ENCODE measurements at regions of chr17 and their contacts with region 1.

Region 1: GRCh38 chr17:79188048-79188447 is 113.4 kb downstream of the ENGASE start:
- DNase-seq: peak; percentile 97
- H3K4me3 ChIP-seq: no peak overlapping the region
- H3K27ac ChIP-seq: no peak overlapping the region
- H3K4me1 ChIP-seq: peaks cover 0 to 3% of the 10 kb centered on the region in 2 experiments; a peak in 1 of 4 replicates
- H3K27me3 ChIP-seq: peaks cover 44% of the 10 kb centered on the region
- CTCF ChIP-seq: peak; percentile 63
- EP300 ChIP-seq: no peak
- RAD21 ChIP-seq: peak; percentile 92

Region 2: DNA sequence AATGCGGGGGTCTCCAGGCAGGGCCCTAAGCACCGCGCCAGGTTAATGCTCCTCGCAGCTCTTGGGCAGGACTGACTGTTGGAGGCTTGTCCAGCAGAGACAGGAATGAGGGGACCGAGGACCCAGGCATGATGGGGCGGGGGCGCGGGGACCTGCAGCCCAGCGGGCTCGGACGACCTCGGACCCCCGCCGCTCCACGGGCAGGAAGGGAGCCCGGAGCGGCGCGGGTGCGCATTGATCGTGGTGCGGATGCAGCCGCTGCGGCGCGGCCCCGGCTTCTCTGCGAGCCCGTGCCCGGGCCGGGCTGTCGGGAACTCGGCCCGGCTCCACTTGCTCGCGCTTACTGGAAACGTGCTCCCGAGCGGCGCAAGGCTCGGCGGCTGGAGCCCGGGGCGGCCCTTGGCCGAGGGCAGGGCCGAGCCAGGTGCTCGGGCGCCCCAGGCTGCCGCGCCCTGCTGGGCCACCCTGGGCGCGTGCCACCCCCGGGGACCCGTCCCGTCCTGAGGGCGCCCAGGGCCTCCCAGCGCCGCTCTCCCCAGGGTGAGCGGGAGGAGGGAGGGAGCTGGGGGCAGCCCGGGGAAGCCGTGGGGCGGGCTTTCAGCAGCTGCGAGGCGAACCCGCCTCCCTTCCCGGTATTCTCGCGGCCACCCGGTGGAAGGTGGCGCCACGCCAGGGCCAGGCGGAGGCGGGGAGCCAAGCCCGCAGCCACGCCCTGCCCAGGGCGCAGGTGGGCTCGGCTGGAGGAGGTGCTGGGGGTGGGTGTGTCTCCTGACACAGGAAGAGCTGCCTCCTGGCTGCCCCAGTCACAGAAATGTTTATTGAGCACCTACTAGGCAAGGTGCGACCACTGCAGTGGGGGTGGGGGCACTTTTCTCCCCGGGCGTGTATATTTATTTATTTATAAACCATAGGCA is 874.1 kb before region 1 on chr17:
- CTCF ChIA-PET with region 1: no interaction called
- POLR2A ChIA-PET with region 1: no interaction called
- DNase-seq: peak; percentile 95
- H3K4me3 ChIP-seq: peak overlapping the region; percentile 48 to 50
- H3K27ac ChIP-seq: peak overlapping the region; percentile 18 to 99; a peak in 3 of 4 replicates
- H3K4me1 ChIP-seq: peaks cover 21 to 32% of the 10 kb centered on the region in 2 experiments; a peak in 3 of 4 replicates
- H3K27me3 ChIP-seq: no peaks in the 10 kb centered on the region
- CTCF ChIP-seq: 0 out of 2 replicates have a peak, but pooled peaks have one; percentile 8
- EP300 ChIP-seq: no peak
- RAD21 ChIP-seq: no peak

Region 3: GRCh38 chr17:79082311-79083190 is 105.5 kb before region 1 on chr17:
- CTCF ChIA-PET with region 1: interaction called, 120 read pairs
- POLR2A ChIA-PET with region 1: no interaction called
- DNase-seq: peak; percentile 96
- H3K4me3 ChIP-seq: no peak overlapping the region; a peak in 1 of 4 replicates
- H3K27ac ChIP-seq: no peak overlapping the region; a peak in 1 of 4 replicates
- H3K4me1 ChIP-seq: peaks cover 0 to 13% of the 10 kb centered on the region in 2 experiments; a peak in 1 of 4 replicates
- H3K27me3 ChIP-seq: no peaks in the 10 kb centered on the region
- CTCF ChIP-seq: peak; percentile 98
- EP300 ChIP-seq: no peak
- RAD21 ChIP-seq: peak; percentile 78

Region 4: GRCh38 chr17:79174905-79175856 is 12.9 kb before region 1 on chr17:
- CTCF ChIA-PET with region 1: interaction called, 100 read pairs
- POLR2A ChIA-PET with region 1: interaction called, 3 read pairs
- DNase-seq: no peak
- H3K4me3 ChIP-seq: no peak overlapping the region
- H3K27ac ChIP-seq: no peak overlapping the region
- H3K4me1 ChIP-seq: peaks cover 0 to 6% of the 10 kb centered on the region in 2 experiments; a peak in 1 of 4 replicates
- H3K27me3 ChIP-seq: peaks cover 41% of the 10 kb centered on the region
- CTCF ChIP-seq: no peak
- EP300 ChIP-seq: no peak
- RAD21 ChIP-seq: no peak

Region 5: GRCh38 chr17:79248843-79249493 is 60.9 kb after region 1 on chr17:
- CTCF ChIA-PET with region 1: interaction called, 14 read pairs
- POLR2A ChIA-PET with region 1: no interaction called
- DNase-seq: no peak
- H3K4me3 ChIP-seq: no peak overlapping the region
- H3K27ac ChIP-seq: no peak overlapping the region
- H3K4me1 ChIP-seq: peaks cover 0 to 18% of the 10 kb centered on the region in 2 experiments; a peak in 1 of 4 replicates
- H3K27me3 ChIP-seq: peaks cover 7% of the 10 kb centered on the region
- CTCF ChIP-seq: no peak
- EP300 ChIP-seq: no peak
- RAD21 ChIP-seq: no peak

Region 6: GRCh38 chr17:79330696-79331095 is 142.6 kb after region 1 on chr17:
- CTCF ChIA-PET with region 1: no interaction called
- POLR2A ChIA-PET with region 1: no interaction called
- DNase-seq: no peak
- H3K4me3 ChIP-seq: no peak overlapping the region
- H3K27ac ChIP-seq: no peak overlapping the region
- H3K4me1 ChIP-seq: no peaks in the 10 kb centered on the region
- H3K27me3 ChIP-seq: peaks cover 15% of the 10 kb centered on the region
- CTCF ChIP-seq: no peak
- EP300 ChIP-seq: no peak
- RAD21 ChIP-seq: no peak

Region 7: DNA sequence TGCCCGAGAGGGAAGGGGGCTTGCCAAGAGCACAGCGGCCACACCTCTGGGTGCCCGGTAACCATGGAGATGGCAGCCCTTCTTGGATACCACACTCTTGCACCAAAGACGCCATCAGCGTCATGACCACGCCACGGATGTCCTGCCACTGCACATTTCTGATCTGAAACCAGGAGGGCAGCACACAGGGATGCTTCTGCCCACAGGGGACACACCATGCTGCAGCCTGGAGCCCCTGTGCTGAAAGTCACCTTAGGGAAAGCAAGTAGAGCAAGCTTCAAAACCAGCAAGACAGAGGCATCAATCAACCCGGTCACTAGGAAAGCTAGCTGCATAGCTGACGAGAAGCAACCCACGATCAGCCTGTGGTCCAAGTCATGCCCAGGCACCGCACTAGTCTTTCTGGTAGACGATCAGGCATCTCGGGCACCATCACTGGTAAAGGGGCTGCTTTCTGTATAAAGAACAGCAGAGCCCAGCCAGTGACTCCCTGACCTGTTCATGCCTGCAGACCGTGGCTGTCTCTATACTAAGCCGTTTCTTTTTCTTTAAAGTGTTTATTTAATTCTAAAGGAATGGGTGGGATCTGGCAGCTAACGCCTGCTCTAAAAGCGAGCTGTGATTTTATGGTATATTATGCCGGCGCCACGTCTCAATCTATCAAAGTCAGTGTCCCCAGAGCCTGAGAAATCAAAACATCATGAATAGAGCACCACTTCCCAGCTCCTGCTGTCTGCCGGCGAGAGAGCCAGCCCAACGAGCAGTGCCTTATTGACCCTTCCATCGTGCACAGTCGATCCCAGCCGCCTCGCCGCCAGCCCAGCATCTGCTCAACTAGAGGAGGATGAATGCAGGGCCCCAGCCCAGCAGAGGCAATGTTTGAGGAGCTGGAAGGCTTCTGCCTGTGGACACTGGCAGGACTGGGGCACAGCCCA is 178.1 kb after region 1 on chr17:
- CTCF ChIA-PET with region 1: interaction called, 14 read pairs
- POLR2A ChIA-PET with region 1: no interaction called
- DNase-seq: no peak
- H3K4me3 ChIP-seq: no peak overlapping the region
- H3K27ac ChIP-seq: no peak overlapping the region
- H3K4me1 ChIP-seq: no peaks in the 10 kb centered on the region; a peak in 1 of 4 replicates
- H3K27me3 ChIP-seq: peaks cover 34% of the 10 kb centered on the region; the same call in 1 of the 2 replicates
- CTCF ChIP-seq: no peak
- EP300 ChIP-seq: no peak
- RAD21 ChIP-seq: no peak

Region 8: GRCh38 chr17:79413611-79414010 is 225.6 kb after region 1 on chr17:
- CTCF ChIA-PET with region 1: interaction called, 13 read pairs
- POLR2A ChIA-PET with region 1: no interaction called
- DNase-seq: peak; percentile 72
- H3K4me3 ChIP-seq: no peak overlapping the region
- H3K27ac ChIP-seq: no peak overlapping the region
- H3K4me1 ChIP-seq: peaks cover 0 to 16% of the 10 kb centered on the region in 2 experiments; a peak in 1 of 4 replicates
- H3K27me3 ChIP-seq: peaks cover 53% of the 10 kb centered on the region
- CTCF ChIP-seq: no peak
- EP300 ChIP-seq: no peak
- RAD21 ChIP-seq: no peak

Region 9: GRCh38 chr17:79877041-79877705 is 689.1 kb after region 1 on chr17:
- CTCF ChIA-PET with region 1: no interaction called
- POLR2A ChIA-PET with region 1: no interaction called
- DNase-seq: peak; percentile 13
- H3K4me3 ChIP-seq: no peak overlapping the region
- H3K27ac ChIP-seq: no peak overlapping the region
- H3K4me1 ChIP-seq: no peaks in the 10 kb centered on the region
- H3K27me3 ChIP-seq: no peaks in the 10 kb centered on the region; the same call in 1 of the 2 replicates
- CTCF ChIP-seq: no peak
- EP300 ChIP-seq: no peak
- RAD21 ChIP-seq: no peak